ENCODE measurements at regions of chr11 and their contacts with region 1.

Region 1: DNA sequence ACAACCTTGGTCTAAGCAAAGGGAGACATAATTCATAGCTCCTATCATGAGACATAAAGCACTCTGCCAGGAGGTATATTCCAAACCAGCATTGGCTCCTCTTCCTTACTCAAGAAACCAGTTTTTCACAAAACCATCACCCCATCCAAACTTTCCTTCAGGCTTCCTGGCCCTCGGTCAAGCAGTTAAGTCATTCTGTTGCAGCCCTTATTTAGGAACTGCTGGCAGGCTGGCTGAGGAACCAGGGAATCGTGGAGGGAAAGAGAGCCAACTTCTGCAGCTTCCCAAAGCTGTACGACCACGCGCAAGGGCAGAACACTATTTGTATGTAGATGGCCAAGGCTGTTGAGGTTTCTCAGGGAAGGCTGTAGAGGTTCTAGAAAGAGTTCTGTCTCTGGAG is 680 bp downstream of the IFT46 start:
- DNase-seq: no peak
- ATAC-seq: no peak
- H3K4me3 ChIP-seq: peak overlapping the region; percentile 72 to 86 (median 78)
- H3K27ac ChIP-seq: peak overlapping the region; percentile 38 to 85 (median 82)
- H3K4me1 ChIP-seq: peaks cover 7% of the 10 kb centered on the region in 2 donors
- H3K27me3 ChIP-seq: no peaks in the 10 kb centered on the region
- CTCF ChIP-seq: no peak
- POLR2A ChIP-seq: no peak

Region 2: GRCh38 chr11:118530408-118531339 is 34.4 kb before region 1 on chr11 and contains the start of gene TMEM25:
- in situ Hi-C with region 1: no loop called
- intact Hi-C with region 1: loop called (anchors 5 kb)
- DNase-seq: peak; percentile 23 to 59
- ATAC-seq: peak; percentile 79 to 81
- H3K4me3 ChIP-seq: peak within 1 kb of the TSS; percentile 56 to 85 (median 68)
- H3K27ac ChIP-seq: peak within 1 kb of the TSS; percentile 43 to 82 (median 74)
- H3K4me1 ChIP-seq: peaks cover 13 to 19% of the 10 kb centered on the region in 2 donors
- H3K27me3 ChIP-seq: no peaks in the 10 kb centered on the region
- CTCF ChIP-seq: no peak
- POLR2A ChIP-seq: peak in 1 of 2 donors; percentile 27
- total RNA-seq, gene TMEM25: 2.5 to 36.6 (median 10.7) TPM

Region 3: DNA sequence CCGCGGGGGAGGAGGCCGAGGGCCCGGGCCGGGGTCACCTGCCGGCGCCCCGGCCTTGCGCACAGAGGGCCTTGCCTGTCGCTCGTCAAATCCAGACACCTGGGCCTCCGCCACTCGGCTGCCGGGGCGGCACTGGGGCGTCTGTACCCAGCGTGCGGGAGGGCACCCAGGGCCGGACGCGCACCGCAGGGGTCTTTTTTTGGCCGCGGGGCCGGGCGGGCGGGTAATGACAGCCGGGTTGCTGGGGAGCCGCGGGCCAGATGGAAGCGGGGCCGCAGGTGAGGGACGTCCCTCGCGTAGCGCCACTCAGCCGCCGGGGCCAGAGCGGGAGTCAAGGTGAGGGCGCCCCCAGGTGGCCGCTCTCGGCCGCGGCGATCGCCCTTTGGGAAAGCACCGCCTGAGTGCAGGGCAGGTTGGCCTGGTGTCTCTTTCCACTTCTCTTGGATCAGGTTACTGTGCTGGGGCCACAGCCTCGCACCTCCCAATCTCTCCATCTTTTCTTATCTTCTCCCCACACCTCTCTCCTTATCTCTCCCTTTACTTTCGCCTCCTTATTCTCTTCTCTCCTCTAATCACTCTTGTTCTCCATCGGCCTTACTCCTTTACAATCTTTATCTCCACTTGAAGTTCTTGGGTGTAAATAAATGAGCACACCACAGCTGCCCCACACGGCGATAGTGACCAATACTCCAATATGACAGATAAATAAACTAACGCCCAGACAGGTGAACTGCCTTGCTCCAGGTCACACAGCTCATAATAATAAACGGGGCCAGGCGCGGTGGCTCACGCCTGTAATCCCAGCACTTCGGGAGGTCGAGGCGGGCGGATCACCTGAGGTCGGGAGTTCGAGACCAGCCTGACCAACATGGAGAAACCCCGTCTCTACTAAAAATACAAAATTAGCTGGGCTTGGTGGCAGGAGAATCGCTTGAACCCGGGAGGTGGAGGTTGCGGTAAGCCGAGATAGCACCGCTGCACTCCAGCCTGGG is 46.0 kb after region 1 on chr11:
- in situ Hi-C with region 1: no loop called
- intact Hi-C with region 1: no loop called
- DNase-seq: peak in 1 of 2 donors; percentile 62
- ATAC-seq: peak in 1 of 2 donors; percentile 34
- H3K4me3 ChIP-seq: peak overlapping the region; percentile 68 to 91 (median 76)
- H3K27ac ChIP-seq: peak overlapping the region; percentile 80 to 91 (median 88)
- H3K4me1 ChIP-seq: peaks cover 9 to 12% of the 10 kb centered on the region in 2 donors
- H3K27me3 ChIP-seq: no peaks in the 10 kb centered on the region
- CTCF ChIP-seq: peak; percentile 57 to 81 (median 72)
- POLR2A ChIP-seq: peak in 1 of 2 donors; percentile 31

Measured in gastrocnemius medialis (tissue), 4 donors.